ENCODE measurements at regions of chr11 and their contacts with region 1.

Region 1: GRCh38 chr11:57311109-57311936 is 13.4 kb downstream of the TNKS1BP1 start:
- DNase-seq: peak; percentile 84
- H3K4me3 ChIP-seq: peak overlapping the region; percentile 58
- CTCF ChIP-seq: no peak

Region 2: DNA sequence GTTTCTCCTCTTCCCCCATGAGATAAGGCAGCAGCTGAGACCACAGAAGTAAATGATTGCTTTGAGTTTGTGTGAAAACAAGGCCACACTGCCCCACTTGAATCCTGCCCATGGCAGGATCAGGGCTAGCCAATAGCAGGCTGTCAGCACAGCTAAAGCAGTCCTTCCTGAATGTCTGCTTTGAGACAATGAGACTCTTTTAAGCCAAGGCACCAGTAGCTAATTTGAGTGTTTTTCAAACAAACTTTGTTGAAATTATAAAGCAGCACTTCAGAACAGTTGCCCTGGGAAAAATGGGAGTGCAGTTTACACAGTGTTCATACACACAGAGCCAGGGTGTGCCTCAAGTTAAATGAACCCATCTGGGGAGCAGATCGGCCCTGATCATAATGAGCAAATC is 426.1 kb before region 1 on chr11:
- CTCF ChIA-PET with region 1: no interaction called
- POLR2A ChIA-PET with region 1: no interaction called
- DNase-seq: no peak
- H3K4me3 ChIP-seq: no peak overlapping the region
- CTCF ChIP-seq: no peak

Region 3: GRCh38 chr11:57294605-57295131 is 16.7 kb before region 1 on chr11:
- CTCF ChIA-PET with region 1: no interaction called
- POLR2A ChIA-PET with region 1: interaction called, 24 read pairs
- DNase-seq: no peak
- H3K4me3 ChIP-seq: no peak overlapping the region
- CTCF ChIP-seq: no peak

Region 4: DNA sequence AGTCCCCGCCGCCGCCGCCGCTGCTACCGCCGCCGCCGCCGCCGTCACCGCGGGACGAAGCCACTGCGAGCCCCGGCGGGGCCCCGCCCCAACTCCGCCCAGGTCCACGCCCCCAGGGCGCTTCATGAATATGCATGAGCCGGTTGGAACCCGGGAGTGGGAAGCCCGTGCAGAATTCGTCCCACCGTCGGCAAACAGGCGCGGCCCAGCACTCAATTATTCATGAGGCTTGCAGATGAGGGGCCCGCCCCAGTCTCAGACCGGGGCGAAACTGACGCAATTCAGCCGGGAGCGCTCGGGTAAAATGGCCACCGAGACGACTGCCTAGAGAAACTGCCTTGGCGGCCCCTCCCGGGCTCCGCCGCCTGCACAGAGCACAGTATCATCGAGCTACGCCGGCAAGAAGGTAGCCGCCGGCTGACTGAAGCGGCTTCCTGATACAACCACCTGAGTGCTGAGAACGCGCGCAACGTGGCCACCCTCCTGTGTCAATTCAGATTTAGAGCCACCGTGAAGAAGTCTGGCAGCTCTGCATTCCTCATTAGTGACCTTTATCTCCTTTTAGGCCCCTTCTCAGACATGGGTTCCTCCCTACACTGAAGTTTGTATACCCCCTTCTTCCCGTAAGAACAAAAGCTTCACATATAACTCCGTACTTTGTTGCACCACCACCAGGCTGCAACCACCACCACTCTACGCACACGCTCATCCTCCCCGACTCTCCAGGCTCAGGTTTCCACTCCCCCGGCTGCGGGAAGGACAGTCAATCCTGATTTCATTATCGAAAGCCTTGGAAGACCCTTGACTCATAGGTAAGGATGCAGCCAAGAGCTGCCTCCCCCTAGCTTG is 13.8 kb after region 1 on chr11 and contains the start of gene TNKS1BP1:
- CTCF ChIA-PET with region 1: interaction called, 17 read pairs
- POLR2A ChIA-PET with region 1: interaction called, 38 read pairs
- DNase-seq: peak; percentile 88
- H3K4me3 ChIP-seq: peak within 1 kb of the TSS; percentile 90
- CTCF ChIP-seq: no peak